HepG2 (cell line): ENCODE measurements at regions of chr6 and their contacts with region 1.

Region 1: DNA sequence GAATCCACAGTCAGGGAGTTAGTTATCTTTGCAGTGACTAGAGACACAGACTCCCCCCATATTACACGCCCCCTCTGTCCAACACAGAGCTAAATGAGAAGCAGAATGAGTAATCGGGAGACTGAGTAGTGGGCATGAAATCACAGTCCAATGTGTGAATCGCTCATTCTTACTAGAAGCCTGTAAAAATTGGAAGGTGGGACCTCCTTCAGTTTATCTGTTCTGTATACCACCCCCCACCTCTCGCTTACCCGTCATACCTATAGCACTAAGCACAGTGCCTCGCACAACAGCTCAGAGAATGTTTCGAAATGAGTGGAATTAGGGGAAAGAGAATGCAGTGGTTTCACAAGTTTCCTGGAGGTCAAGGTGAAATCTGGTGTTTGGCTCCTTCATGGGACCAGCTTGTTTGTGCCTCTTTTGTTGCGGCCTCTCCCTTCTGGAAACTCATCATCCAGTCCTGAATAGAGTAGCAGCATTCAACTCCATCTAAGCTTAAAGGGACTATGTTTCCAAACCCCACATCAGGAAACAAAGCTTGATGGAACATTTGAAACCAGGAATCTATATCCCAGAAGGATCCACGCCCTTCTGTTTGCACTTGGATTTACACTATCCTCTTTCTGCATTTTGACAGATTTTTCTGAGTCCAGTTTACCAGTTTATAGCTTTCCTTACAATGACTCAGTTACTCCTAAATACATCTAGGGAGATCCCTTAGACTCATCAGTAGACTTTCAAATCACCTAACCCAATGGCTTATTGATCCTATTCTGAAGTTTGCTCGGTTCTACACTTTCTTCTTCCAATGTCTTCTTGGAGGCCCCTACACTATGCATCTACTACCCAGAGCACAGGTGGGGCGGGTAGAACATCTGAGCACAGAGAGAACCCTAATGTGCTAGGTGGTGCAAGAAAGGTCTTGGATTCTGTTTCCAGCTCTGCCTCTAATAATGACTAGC is 59.2 kb upstream of the PIM1 start:
- DNase-seq: peak; percentile 96
- ATAC-seq: peak; percentile 82
- H3K4me3 ChIP-seq: peak overlapping the region; percentile 20 to 45 (median 41); a peak in 5 of 6 replicates
- H3K27ac ChIP-seq: peak overlapping the region; percentile 76
- H3K4me1 ChIP-seq: peaks cover 79% of the 10 kb centered on the region
- H3K27me3 ChIP-seq: no peaks in the 10 kb centered on the region
- CTCF ChIP-seq: peak; percentile 9; the same call in 1 of the 2 replicates
- EP300 ChIP-seq: peak; percentile 61 to 95; a peak in 3 of 4 replicates
- POLR2A ChIP-seq: no peak
- RAD21 ChIP-seq: peak; percentile 10; the same call in 1 of the 2 replicates

Region 2: DNA sequence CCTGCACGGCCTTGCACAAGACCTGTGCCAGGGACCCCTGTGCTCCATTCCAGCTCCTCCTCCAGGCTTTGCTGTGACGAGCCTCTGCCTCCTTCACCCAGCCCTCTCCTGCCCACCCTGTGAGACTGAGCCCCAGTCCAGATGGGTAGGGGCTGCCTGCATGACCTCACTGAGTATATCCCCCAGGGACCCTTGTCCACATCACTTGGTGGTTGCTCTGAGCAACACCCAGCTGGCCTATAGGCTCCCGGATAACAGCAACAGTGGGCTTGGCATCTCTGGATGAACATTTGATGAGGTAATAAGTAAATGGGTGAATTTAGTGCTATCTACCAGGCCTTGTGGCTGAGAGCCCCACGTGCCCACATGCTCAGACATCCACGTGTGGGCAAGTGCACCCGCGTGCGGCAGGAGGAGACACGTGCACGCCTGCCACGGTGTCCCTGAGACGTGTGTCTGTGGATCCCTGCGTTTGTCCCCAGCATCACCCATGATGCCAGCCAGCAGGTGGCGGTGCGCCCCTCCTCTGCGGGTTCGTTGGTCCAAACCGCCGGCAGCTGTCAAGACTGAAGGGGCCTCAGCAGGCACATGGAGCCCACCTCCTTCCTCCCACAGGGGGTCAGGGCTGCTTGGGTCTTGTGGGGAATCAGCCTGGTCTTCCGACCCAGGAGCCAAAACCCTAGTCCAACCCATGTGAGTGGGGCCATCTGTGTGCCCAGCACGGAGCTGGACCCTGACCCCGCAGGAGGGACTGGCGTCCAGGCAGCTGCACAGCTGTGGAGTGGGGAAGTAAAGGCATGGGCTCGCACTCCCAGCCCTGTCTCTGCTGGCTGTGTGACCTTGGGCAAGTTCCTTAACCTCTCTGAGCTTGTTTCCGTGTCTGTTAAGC is 59.4 kb before region 1 on chr6:
- CTCF ChIA-PET with region 1: no interaction called
- POLR2A ChIA-PET with region 1: interaction called, 15 read pairs
- in situ Hi-C with region 1: no loop called
- intact Hi-C with region 1: no loop called
- DNase-seq: peak; percentile 70
- ATAC-seq: peak; percentile 82
- H3K4me3 ChIP-seq: peak overlapping the region in 2 of 3 experiments; percentile 12 to 64; a peak in 3 of 6 replicates
- H3K27ac ChIP-seq: no peak overlapping the region
- H3K4me1 ChIP-seq: peaks cover 78% of the 10 kb centered on the region
- H3K27me3 ChIP-seq: peaks cover 2 to 17% of the 10 kb centered on the region in 2 experiments; a peak in 4 of 5 replicates
- CTCF ChIP-seq: peak; percentile 100
- EP300 ChIP-seq: no peak
- POLR2A ChIP-seq: no peak
- RAD21 ChIP-seq: peak; percentile 100

Region 3: GRCh38 chr6:37083243-37084138 is 27.3 kb before region 1 on chr6:
- CTCF ChIA-PET with region 1: no interaction called
- POLR2A ChIA-PET with region 1: interaction called, 73 read pairs
- in situ Hi-C with region 1: no loop called
- intact Hi-C with region 1: no loop called
- DNase-seq: peak; percentile 96
- ATAC-seq: peak; percentile 96
- H3K4me3 ChIP-seq: peak overlapping the region; percentile 3 to 57 (median 15); a peak in 2 of 6 replicates
- H3K27ac ChIP-seq: peak overlapping the region; percentile 74
- H3K4me1 ChIP-seq: peaks cover 76% of the 10 kb centered on the region
- H3K27me3 ChIP-seq: no peaks in the 10 kb centered on the region
- CTCF ChIP-seq: peak; percentile 49
- EP300 ChIP-seq: peak; percentile 95 to 98
- POLR2A ChIP-seq: peak; percentile 33 to 50; a peak in 1 of 4 replicates
- RAD21 ChIP-seq: peak; percentile 66

Region 4: DNA sequence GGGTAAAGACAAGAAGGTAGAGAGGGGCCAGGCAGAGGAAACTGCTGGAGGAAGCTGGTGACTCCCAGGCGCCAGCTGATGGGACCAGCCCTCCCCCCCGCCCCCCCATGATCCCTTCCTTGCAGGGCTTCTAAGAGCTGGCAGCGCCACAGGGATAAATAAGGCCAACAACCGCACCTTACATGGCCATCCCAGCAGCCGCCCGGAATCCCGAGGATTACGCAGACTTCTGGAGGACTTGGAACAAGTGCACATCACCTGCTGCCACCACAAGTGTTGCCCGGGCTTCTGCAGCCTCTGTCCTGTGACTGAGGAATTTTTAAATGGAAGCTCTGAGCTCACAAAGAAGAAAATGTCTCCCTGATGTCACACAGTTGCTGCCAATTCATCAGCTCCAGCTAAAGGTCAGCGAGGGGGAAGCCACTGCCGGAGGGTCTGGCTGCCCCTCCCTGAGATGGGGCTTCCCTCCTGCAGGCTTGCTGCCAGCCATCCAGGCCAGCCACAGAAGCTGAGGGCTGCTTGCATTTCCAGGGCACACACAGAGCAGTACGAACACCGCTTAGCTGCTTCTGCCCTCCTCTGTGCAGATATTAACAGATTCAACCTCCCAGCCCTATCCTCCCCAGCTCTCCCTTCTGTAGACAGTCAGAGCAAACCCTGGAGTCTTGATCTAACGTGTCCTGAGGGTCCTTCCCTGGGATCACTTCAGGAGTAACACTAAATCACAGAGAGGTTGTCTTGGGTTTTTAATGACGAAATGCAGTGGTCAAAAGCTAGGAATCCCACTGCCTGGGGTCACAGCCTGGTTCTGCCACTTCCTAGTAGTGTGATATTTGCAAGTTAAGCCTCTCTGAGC is 20.6 kb after region 1 on chr6:
- CTCF ChIA-PET with region 1: no interaction called
- POLR2A ChIA-PET with region 1: interaction called, 172 read pairs
- in situ Hi-C with region 1: no loop called
- intact Hi-C with region 1: no loop called
- DNase-seq: peak; percentile 68
- ATAC-seq: peak; percentile 57
- H3K4me3 ChIP-seq: peak overlapping the region; percentile 39 to 68 (median 52)
- H3K27ac ChIP-seq: peak overlapping the region; percentile 95
- H3K4me1 ChIP-seq: peaks cover 90% of the 10 kb centered on the region
- H3K27me3 ChIP-seq: no peaks in the 10 kb centered on the region
- CTCF ChIP-seq: peak; percentile 42; the same call in 1 of the 2 replicates
- EP300 ChIP-seq: no peak
- POLR2A ChIP-seq: peak in 1 of 2 experiments; percentile 15; a peak in 1 of 4 replicates
- RAD21 ChIP-seq: peak; percentile 38

Region 5: DNA sequence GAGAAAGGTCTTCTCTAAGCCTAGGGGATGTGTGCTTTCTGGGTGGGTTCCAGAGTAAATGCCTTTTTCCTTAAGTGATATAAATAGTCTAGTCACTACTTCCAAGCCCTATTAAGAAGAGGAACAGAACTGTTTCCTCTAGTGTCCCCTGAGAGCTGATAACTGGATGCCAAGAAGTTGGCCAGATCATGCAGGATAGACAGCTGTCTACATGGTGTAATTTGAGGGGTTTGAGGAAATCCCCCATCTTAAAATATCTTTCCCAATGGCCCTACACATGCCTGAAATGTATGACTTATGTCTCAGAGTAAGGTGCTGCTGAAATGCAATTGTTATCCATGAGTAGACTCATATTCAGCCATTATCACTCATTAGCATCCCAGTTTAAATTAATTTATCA is 39.0 kb after region 1 on chr6:
- CTCF ChIA-PET with region 1: no interaction called
- POLR2A ChIA-PET with region 1: interaction called, 18 read pairs
- in situ Hi-C with region 1: no loop called
- intact Hi-C with region 1: no loop called
- DNase-seq: no peak
- ATAC-seq: no peak
- H3K4me3 ChIP-seq: no peak overlapping the region
- H3K27ac ChIP-seq: no peak overlapping the region
- H3K4me1 ChIP-seq: peaks cover 84% of the 10 kb centered on the region
- H3K27me3 ChIP-seq: no peaks in the 10 kb centered on the region
- CTCF ChIP-seq: no peak
- EP300 ChIP-seq: no peak
- POLR2A ChIP-seq: no peak
- RAD21 ChIP-seq: no peak